MCF 10A (cell line): ENCODE measurements at regions of chr12 and their contacts with region 1.

Region 1: DNA sequence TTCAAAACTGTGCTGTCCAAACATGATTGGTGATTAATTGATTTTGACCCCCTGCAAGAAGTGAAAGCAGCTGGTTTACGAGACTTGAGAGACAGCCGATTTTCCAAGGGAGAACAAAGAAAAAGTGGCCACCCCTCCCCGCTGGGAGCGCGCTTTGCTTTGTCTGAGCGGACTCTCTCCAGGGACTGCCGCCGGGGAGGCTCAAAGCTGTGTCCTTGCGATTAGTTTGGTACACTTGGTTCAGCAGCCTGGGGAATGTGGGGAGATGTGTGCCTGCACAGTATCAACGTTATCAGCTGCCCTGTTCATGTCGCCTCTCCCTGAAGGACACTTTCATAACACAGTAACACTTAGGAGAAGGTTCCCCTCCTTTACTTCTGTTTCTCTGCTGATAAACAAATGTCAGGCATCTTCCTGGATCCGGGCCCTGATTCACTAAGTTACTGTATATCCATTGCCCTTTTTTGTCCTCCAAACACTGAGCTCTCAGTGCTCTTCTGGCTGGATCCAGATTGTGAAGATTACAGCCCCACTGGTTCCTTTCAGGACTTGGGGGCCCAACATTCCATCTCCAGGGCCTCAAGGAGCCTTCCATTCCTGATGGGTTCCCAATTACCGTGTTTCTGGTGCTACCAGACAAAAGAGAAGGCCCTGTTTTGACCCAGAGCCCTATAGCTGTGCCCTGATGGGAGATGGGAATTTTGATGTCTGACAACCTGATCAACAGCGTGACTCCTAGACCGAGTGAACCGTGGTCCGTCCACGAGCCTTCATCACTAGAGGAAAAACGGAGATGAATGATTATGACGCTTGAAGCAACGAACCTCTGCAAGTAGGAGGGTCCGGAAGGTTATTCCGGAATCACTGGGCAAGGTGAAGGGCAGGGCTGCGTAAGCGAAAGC is 31.7 kb upstream of the TUBA1C start:
- DNase-seq: no peak
- H3K4me3 Mint-ChIP-seq: peak overlapping the region; percentile 32
- H3K27ac Mint-ChIP-seq: no peak overlapping the region
- H3K4me1 Mint-ChIP-seq: peaks cover 5% of the 10 kb centered on the region
- H3K27me3 Mint-ChIP-seq: no peaks in the 10 kb centered on the region
- CTCF ChIP-seq: no peak

Region 2: DNA sequence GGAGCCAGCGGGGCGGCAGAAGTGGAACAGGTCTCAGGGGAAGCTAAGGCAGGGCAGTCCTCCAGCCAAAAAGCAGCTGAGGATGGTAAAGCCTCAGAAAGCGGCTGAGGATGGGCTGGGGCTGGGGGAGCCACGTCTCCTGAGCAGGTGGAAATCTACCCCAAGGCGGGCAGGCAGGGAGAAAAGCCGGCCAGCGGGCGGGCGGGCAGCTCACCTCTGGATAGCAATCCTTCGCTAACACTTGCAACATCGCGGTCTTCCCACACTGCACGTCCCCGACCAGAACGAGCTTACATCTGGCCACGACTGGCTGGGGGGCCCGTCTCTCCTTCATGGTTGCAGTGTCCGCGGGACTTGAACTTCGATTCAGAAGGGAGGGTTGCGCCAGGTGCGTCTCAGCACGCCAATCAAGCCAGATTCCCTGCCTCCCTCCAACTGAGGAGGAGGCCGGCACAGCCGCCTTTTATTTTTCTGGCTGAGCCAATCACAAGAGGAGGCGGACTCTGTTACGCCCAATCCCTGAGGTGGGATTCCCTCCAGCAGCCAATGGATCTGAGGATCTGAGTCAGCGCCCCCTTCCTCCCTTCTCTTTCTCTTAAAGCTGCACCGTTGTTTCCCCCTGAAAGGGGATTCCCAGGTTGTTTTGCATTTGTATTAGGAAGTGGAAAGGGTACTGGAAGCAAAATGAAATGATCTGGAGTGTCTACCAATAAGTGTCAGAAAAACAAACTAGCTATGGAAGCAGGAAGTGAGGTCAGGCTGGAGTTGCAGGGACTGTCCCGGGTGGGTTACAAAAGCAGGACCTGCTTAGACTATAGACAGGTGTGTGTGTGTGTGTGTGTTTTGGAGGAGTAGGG is 367.5 kb before region 1 on chr12 and contains the start of gene RND1:
- CTCF ChIA-PET with region 1: no interaction called
- POLR2A ChIA-PET with region 1: no interaction called
- intact Hi-C with region 1: no loop called
- DNase-seq: peak; percentile 95
- H3K4me3 Mint-ChIP-seq: peak within 1 kb of the TSS; percentile 81
- H3K27ac Mint-ChIP-seq: peak within 1 kb of the TSS; percentile 71
- H3K4me1 Mint-ChIP-seq: peaks cover 16% of the 10 kb centered on the region
- H3K27me3 Mint-ChIP-seq: no peaks in the 10 kb centered on the region
- CTCF ChIP-seq: no peak
- total RNA-seq, gene RND1: 1.0 and 1.2 TPM in 2 replicates

Region 3: GRCh38 chr12:49060237-49061156 is 172.7 kb before region 1 on chr12 and contains the start of gene KMT2D:
- CTCF ChIA-PET with region 1: interaction called, 18 read pairs
- POLR2A ChIA-PET with region 1: interaction called, 4 read pairs
- intact Hi-C with region 1: loop called (anchors 1 kb)
- DNase-seq: peak; percentile 91
- H3K4me3 Mint-ChIP-seq: peak within 1 kb of the TSS; percentile 91
- H3K27ac Mint-ChIP-seq: peak within 1 kb of the TSS; percentile 89
- H3K4me1 Mint-ChIP-seq: peaks cover 32% of the 10 kb centered on the region
- H3K27me3 Mint-ChIP-seq: no peaks in the 10 kb centered on the region
- CTCF ChIP-seq: no peak
- total RNA-seq, gene KMT2D: 76.9 and 92.5 TPM in 2 replicates

Region 4: GRCh38 chr12:49110464-49111155 is 122.6 kb before region 1 on chr12 and contains the start of gene LMBR1L:
- CTCF ChIA-PET with region 1: interaction called, 4 read pairs
- POLR2A ChIA-PET with region 1: interaction called, 4 read pairs
- intact Hi-C with region 1: loop called (anchors 1 kb)
- DNase-seq: peak; percentile 99
- H3K4me3 Mint-ChIP-seq: peak within 1 kb of the TSS; percentile 86
- H3K27ac Mint-ChIP-seq: peak within 1 kb of the TSS; percentile 97
- H3K4me1 Mint-ChIP-seq: peaks cover 18% of the 10 kb centered on the region
- H3K27me3 Mint-ChIP-seq: no peaks in the 10 kb centered on the region
- CTCF ChIP-seq: peak; percentile 14
- total RNA-seq, gene LMBR1L: 27.8 and 35.7 TPM in 2 replicates

Region 5: GRCh38 chr12:49188914-49189367 is 44.2 kb before region 1 on chr12 and contains the start of gene TUBA1A:
- CTCF ChIA-PET with region 1: interaction called, 3 read pairs
- POLR2A ChIA-PET with region 1: interaction called, 15 read pairs
- intact Hi-C with region 1: loop called (anchors 1 kb)
- DNase-seq: peak; percentile 68
- H3K4me3 Mint-ChIP-seq: peak within 1 kb of the TSS; percentile 91
- H3K27ac Mint-ChIP-seq: peak within 1 kb of the TSS; percentile 89
- H3K4me1 Mint-ChIP-seq: peaks cover 12% of the 10 kb centered on the region
- H3K27me3 Mint-ChIP-seq: peaks cover 22% of the 10 kb centered on the region
- CTCF ChIP-seq: no peak
- total RNA-seq, gene TUBA1A: 9.8 and 10.4 TPM in 2 replicates

Region 6: GRCh38 chr12:49200919-49201594 is 32.1 kb before region 1 on chr12:
- CTCF ChIA-PET with region 1: no interaction called
- POLR2A ChIA-PET with region 1: interaction called, 11 read pairs
- intact Hi-C with region 1: no loop called
- DNase-seq: peak; percentile 83
- H3K4me3 Mint-ChIP-seq: no peak overlapping the region
- H3K27ac Mint-ChIP-seq: peak overlapping the region; percentile 77
- H3K4me1 Mint-ChIP-seq: peaks cover 16% of the 10 kb centered on the region
- H3K27me3 Mint-ChIP-seq: no peaks in the 10 kb centered on the region
- CTCF ChIP-seq: no peak

Region 7: DNA sequence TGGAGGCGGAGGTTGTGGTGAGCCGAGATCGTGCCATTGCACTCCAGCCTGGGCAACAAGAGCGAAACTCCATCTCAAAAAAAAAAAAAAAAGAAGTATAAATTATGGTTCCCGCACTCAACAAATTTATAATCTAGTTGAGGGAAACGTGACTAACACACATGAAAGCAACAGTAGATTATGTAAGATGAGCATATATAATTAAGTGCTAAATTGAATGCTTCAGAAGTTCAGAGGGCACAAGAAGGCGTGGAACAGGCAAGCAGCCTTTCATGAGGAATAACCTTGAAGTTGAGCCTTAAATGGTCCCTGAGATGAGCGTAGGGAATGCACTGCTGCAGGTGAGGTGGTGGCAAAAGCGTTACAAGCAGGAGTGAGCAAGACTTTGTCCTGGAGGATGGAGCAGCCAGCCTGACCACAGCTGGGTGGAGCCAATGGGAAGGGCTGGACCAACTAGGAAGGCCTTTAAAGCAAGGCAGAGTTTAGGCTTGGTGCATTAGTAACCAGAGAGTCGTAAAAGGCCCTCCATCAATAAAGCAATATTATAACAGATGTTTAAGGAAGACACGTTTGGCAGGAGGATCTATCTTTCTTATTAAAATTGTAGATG is 13.7 kb before region 1 on chr12:
- CTCF ChIA-PET with region 1: interaction called, 30 read pairs
- POLR2A ChIA-PET with region 1: interaction called, 7 read pairs
- intact Hi-C with region 1: no loop called
- DNase-seq: no peak
- H3K4me3 Mint-ChIP-seq: no peak overlapping the region
- H3K27ac Mint-ChIP-seq: no peak overlapping the region
- H3K4me1 Mint-ChIP-seq: peaks cover 7% of the 10 kb centered on the region
- H3K27me3 Mint-ChIP-seq: no peaks in the 10 kb centered on the region
- CTCF ChIP-seq: no peak

Region 8: DNA sequence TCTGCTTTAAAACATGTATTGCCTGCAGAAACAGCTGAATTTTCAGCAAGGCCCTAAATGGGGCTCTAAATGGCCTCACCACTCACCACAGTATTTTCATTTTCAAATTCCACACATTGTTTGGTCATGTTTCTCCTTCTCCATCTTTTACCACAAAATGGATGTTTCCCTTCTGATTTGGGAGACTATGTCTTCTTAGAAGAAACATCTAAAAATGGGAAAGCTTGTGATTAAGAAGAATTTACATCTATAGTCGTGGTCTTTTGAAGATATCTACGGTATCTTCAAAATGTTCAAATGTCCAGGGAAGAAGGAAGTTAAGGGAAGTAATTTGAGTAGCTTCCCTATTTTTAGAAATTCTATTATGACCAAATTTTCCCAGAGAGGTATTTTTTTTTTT is 11.0 kb after region 1 on chr12:
- CTCF ChIA-PET with region 1: interaction called, 10 read pairs
- POLR2A ChIA-PET with region 1: interaction called, 5 read pairs
- intact Hi-C with region 1: no loop called
- DNase-seq: no peak
- H3K4me3 Mint-ChIP-seq: no peak overlapping the region
- H3K27ac Mint-ChIP-seq: no peak overlapping the region
- H3K4me1 Mint-ChIP-seq: no peaks in the 10 kb centered on the region
- H3K27me3 Mint-ChIP-seq: no peaks in the 10 kb centered on the region
- CTCF ChIP-seq: no peak